MCF 10A (cell line): ENCODE measurements at regions of chr17 and their contacts with region 1.

Region 1: GRCh38 chr17:27601069-27601975 is 29.7 kb upstream of the LGALS9 start:
- DNase-seq: peak; percentile 79
- H3K4me3 Mint-ChIP-seq: no peak overlapping the region
- H3K27ac Mint-ChIP-seq: no peak overlapping the region
- H3K4me1 Mint-ChIP-seq: peaks cover 21% of the 10 kb centered on the region
- H3K27me3 Mint-ChIP-seq: no peaks in the 10 kb centered on the region
- CTCF ChIP-seq: peak; percentile 93

Region 2: GRCh38 chr17:27199948-27200347 is 401.4 kb before region 1 on chr17:
- CTCF ChIA-PET with region 1: interaction called, 28 read pairs
- POLR2A ChIA-PET with region 1: no interaction called
- intact Hi-C with region 1: no loop called
- DNase-seq: no peak
- H3K4me3 Mint-ChIP-seq: no peak overlapping the region
- H3K27ac Mint-ChIP-seq: no peak overlapping the region
- H3K4me1 Mint-ChIP-seq: no peaks in the 10 kb centered on the region
- H3K27me3 Mint-ChIP-seq: no peaks in the 10 kb centered on the region
- CTCF ChIP-seq: no peak

Region 3: GRCh38 chr17:27332485-27333409 is 268.6 kb before region 1 on chr17:
- CTCF ChIA-PET with region 1: interaction called, 10 read pairs
- POLR2A ChIA-PET with region 1: interaction called, 4 read pairs
- intact Hi-C with region 1: no loop called
- DNase-seq: peak; percentile 98
- H3K4me3 Mint-ChIP-seq: peak overlapping the region; percentile 71
- H3K27ac Mint-ChIP-seq: peak overlapping the region; percentile 79
- H3K4me1 Mint-ChIP-seq: peaks cover 34% of the 10 kb centered on the region
- H3K27me3 Mint-ChIP-seq: no peaks in the 10 kb centered on the region
- CTCF ChIP-seq: peak; percentile 98

Region 4: GRCh38 chr17:27381007-27381501 is 220.3 kb before region 1 on chr17:
- CTCF ChIA-PET with region 1: interaction called, 11 read pairs
- POLR2A ChIA-PET with region 1: no interaction called
- intact Hi-C with region 1: no loop called
- DNase-seq: peak; percentile 61
- H3K4me3 Mint-ChIP-seq: no peak overlapping the region
- H3K27ac Mint-ChIP-seq: no peak overlapping the region
- H3K4me1 Mint-ChIP-seq: peaks cover 6% of the 10 kb centered on the region
- H3K27me3 Mint-ChIP-seq: no peaks in the 10 kb centered on the region
- CTCF ChIP-seq: peak; percentile 69

Region 5: DNA sequence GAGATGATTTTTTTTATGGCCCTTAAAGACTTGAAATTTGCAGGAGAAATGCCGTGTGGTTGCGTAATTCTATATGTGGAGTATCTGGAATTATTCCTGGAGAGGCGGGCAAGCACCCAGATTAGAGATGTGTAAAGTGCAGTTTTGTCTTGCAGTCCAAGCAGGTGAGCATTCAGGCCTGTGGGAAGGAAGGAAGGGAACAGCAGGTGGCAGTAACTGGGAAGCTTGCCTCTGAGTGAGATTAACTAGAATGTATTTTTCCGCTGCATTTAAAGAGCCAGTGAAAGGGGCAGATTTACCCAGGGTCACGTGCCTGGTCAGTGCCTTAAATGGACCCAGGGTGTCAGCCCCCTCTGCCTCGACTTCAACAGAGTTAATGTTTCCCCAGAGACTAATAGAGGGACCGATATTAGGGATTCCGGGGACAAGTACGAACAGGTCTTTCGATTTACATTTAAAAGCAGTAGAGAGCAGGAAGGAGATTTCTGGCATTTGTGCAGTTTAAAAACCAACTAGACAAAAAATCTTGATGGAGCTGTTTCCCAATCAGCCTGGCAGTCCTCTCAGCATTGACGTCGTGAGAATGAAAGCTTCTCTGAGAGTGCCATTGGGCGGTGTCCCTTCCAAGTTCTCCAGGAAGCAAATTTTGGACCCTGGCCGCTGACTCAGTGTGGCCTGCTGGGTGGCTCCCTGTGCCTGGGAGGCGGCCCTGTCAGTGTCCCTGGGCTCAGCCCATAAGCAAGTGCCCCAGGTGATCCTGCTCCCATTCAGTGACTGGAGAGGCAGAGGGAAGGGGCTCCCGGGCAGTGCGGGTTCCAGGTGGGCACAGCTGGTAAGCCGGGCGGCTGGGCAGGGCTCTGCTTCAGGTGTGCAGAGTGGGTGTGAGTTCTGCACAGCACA is 106.9 kb before region 1 on chr17:
- CTCF ChIA-PET with region 1: interaction called, 196 read pairs
- POLR2A ChIA-PET with region 1: interaction called, 21 read pairs
- intact Hi-C with region 1: loop called (anchors 1 kb)
- DNase-seq: peak; percentile 93
- H3K4me3 Mint-ChIP-seq: peak overlapping the region; percentile 73
- H3K27ac Mint-ChIP-seq: peak overlapping the region; percentile 88
- H3K4me1 Mint-ChIP-seq: peaks cover 22% of the 10 kb centered on the region
- H3K27me3 Mint-ChIP-seq: no peaks in the 10 kb centered on the region
- CTCF ChIP-seq: peak; percentile 26

Region 6: GRCh38 chr17:27586203-27586721 is 15.1 kb before region 1 on chr17:
- CTCF ChIA-PET with region 1: interaction called, 69 read pairs
- POLR2A ChIA-PET with region 1: no interaction called
- intact Hi-C with region 1: no loop called
- DNase-seq: no peak
- H3K4me3 Mint-ChIP-seq: no peak overlapping the region
- H3K27ac Mint-ChIP-seq: no peak overlapping the region
- H3K4me1 Mint-ChIP-seq: peaks cover 10% of the 10 kb centered on the region
- H3K27me3 Mint-ChIP-seq: no peaks in the 10 kb centered on the region
- CTCF ChIP-seq: no peak

Region 7: GRCh38 chr17:27677191-27677590 is 75.9 kb after region 1 on chr17:
- CTCF ChIA-PET with region 1: no interaction called
- POLR2A ChIA-PET with region 1: no interaction called
- intact Hi-C with region 1: no loop called
- DNase-seq: no peak
- H3K4me3 Mint-ChIP-seq: no peak overlapping the region
- H3K27ac Mint-ChIP-seq: no peak overlapping the region
- H3K4me1 Mint-ChIP-seq: no peaks in the 10 kb centered on the region
- H3K27me3 Mint-ChIP-seq: peaks cover 62% of the 10 kb centered on the region
- CTCF ChIP-seq: no peak